Activated CD4-positive, alpha-beta memory T cell treated with anti-CD3 and anti-CD28 coated beads, Interleukin-2, amount 10 ng/mL, durations not matched to agents 7 days and 5 days (primary cell): ENCODE measurements at regions of chr10 and their contacts with region 1.

Region 1: GRCh38 chr10:6171881-6172695 is 30.6 kb upstream of the PFKFB3 start:
- DNase-seq: no peak
- H3K4me3 Mint-ChIP-seq: no peak overlapping the region
- H3K27ac Mint-ChIP-seq: peak overlapping the region; percentile 12
- H3K4me1 Mint-ChIP-seq: peaks cover 71% of the 10 kb centered on the region
- H3K27me3 Mint-ChIP-seq: no peaks in the 10 kb centered on the region

Region 2: DNA sequence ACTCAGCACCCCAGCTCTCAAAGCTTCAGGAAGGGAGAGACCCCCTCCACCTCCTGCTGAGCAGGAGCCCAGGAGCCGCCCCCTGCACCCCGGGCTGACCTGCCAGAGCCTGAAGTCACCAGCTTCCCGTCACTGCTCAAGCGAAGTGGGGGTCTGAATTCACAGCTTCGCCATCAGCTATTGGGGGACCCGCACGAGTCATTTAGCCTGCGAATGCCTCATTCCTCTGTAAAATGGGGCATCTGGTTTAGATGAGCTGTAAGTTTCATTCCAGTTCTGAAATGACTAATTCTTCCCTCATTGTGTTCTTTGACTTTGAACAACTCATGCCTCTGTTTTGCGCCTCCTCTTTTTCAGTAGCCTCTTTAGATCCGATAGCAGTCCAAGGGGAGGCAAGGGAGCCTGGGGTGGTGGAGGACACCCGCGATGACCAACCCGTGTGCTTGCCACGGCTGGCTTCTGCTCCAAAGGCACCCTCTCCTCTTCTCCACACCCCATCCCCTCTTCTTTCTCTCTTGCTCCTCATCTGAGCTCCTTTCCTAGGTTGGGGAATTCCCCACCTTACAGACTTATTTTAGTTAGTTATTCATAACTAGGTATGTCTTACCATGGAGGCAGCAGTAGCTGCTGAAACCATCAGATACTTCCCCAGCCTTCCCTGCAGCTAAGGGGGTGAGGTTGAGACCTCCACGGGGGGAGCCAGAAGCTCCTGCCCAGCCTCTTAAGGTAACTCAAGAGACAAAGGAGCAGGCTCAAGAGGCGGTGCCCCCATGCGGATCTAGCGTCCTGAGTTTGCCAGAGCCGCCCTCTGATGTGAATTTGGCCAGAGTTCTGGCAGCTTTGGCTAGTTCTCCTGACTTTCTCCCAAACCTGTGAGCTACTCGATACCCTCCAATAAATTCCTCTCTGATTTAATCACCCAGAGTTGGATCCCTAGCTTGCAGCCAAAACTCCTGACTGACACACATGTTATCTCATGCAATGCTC is 35.6 kb before region 1 on chr10:
- CTCF ChIA-PET with region 1: interaction called, 15 read pairs
- POLR2A ChIA-PET with region 1: interaction called, 3 read pairs
- DNase-seq: peak; percentile 59
- H3K4me3 Mint-ChIP-seq: peak overlapping the region; percentile 30
- H3K27ac Mint-ChIP-seq: peak overlapping the region; percentile 56
- H3K4me1 Mint-ChIP-seq: peaks cover 66% of the 10 kb centered on the region
- H3K27me3 Mint-ChIP-seq: peaks cover 27% of the 10 kb centered on the region

Region 3: DNA sequence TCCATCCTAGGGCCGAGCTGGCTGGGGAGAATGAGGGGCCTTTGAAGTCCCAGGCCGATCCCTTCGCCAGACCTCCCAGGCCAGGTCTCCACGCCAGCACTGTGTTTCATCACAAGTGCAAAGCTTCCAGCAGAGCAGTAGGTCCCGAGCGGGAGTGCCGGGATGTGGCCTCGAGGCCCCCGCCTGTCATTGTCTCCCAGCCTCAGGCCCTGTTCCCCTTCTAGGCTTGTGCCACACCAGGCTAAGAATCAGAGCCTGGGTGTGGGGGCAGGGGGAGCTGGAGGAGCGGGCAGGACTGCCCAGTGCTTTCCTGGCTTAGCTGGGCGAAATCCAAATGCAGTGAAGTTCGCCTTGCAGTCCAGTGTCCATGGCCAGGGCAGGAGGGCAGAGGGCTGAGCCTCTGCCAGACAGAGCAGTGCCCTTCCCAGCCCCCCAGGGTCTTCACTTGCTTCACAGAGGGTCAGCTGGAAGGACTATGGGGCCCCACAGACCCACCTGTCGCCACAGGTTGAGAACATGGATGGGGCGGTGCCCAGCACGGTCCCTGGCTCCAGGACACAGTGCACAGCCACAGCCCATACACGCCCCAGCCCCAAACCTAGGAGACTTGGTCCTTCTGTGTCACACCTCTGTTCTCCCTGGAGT is 10.5 kb after region 1 on chr10:
- CTCF ChIA-PET with region 1: interaction called, 47 read pairs
- POLR2A ChIA-PET with region 1: interaction called, 4 read pairs
- DNase-seq: no peak
- H3K4me3 Mint-ChIP-seq: no peak overlapping the region
- H3K27ac Mint-ChIP-seq: no peak overlapping the region
- H3K4me1 Mint-ChIP-seq: peaks cover 25% of the 10 kb centered on the region
- H3K27me3 Mint-ChIP-seq: no peaks in the 10 kb centered on the region